ENCODE measurements at regions of chr3 and their contacts with region 1.

Region 1: DNA sequence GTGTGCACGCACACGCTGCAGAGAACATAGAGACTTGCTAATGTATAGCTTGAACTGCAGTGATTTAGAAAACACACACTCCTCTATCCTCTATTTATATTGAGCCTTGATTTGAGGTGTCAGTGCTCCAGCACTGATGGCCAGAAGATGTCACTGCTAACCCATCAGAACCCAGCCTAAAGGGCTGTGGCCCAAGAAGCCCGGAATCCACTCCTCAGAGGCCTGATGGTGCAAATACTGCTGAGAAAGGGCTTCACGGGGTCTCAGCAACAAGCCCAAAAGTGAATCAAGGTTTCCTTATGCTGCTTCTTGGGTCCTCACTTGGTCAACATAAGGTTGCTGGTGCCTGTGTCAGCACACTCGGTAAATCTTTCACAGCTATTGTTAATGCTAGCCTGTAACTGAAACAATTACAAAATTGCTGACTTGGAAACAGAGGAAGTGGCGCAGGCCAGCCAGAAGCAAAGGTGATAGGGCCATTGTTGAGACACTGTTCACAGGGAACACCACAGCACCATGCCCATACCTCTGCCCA is 60.3 kb downstream of the HEG1 start:
- DNase-seq: no peak
- H3K4me3 ChIP-seq: no peak overlapping the region
- H3K27ac ChIP-seq: peak overlapping the region; percentile 49
- H3K4me1 ChIP-seq: peaks cover 22% of the 10 kb centered on the region
- H3K27me3 ChIP-seq: no peaks in the 10 kb centered on the region
- CTCF ChIP-seq: peak; percentile 32 to 64 (median 38)
- POLR2A ChIP-seq: no peak

Region 2: GRCh38 chr3:124935264-124935663 is 60.3 kb before region 1 on chr3:
- intact Hi-C with region 1: no loop called
- DNase-seq: no peak
- H3K4me3 ChIP-seq: no peak overlapping the region
- H3K27ac ChIP-seq: no peak overlapping the region
- H3K4me1 ChIP-seq: no peaks in the 10 kb centered on the region
- H3K27me3 ChIP-seq: no peaks in the 10 kb centered on the region
- CTCF ChIP-seq: no peak
- POLR2A ChIP-seq: no peak

Region 3: GRCh38 chr3:125165189-125165947 is 169.8 kb after region 1 on chr3:
- intact Hi-C with region 1: loop called (anchors 10 kb)
- DNase-seq: no peak
- H3K4me3 ChIP-seq: no peak overlapping the region
- H3K27ac ChIP-seq: no peak overlapping the region
- H3K4me1 ChIP-seq: peaks cover 18% of the 10 kb centered on the region
- H3K27me3 ChIP-seq: no peaks in the 10 kb centered on the region
- CTCF ChIP-seq: peak in 2 of 3 experiments; percentile 16 to 40
- POLR2A ChIP-seq: no peak

Region 4: DNA sequence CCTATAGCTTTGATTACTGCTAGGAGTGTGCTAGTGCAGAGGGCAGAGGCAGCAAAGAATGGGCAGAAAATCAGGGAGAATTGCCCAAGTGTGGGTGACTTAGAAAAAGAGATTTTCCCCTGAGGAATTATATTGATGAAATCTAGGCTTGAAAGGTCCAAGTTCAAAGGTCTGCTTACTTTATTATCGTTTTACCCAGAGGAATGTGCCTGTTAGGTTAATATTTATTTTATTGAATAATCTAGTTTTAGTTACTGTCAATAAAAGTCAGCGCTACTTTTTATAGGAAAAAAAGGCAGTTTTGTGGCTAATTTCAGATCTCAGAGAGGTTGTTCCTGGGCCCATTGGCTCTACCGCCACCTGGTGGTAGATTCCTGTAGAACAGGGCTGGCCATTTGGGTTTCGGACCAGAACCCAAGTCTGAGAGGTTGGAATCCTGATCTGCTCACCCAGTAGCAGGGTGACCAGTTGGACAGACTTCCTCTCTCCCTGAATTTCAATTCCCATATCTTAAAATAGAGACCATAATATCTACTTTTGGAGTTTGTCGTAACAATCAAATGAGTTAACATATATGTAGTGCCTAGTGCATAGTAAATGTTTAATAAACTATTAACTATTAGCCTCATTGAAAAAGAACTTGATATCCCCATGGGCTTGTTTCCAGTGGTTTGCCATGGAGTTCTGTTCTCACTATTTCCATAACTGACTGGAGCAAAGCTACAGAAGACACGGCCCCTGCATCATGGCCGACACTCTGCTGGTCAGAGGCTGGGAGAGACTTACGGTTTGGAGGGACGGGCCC is 442.3 kb after region 1 on chr3:
- intact Hi-C with region 1: loop called (anchors 5 kb)
- DNase-seq: no peak
- H3K4me3 ChIP-seq: no peak overlapping the region
- H3K27ac ChIP-seq: no peak overlapping the region
- H3K4me1 ChIP-seq: no peaks in the 10 kb centered on the region
- H3K27me3 ChIP-seq: no peaks in the 10 kb centered on the region
- CTCF ChIP-seq: peak; percentile 84 to 90 (median 84)
- POLR2A ChIP-seq: no peak

Measured in vagina (tissue), 2 donors.